CD8-positive, alpha-beta T cell (primary cell): ENCODE measurements at regions of chr12 and their contacts with region 1.

Region 1: GRCh38 chr12:110698171-110698902 is 9.4 kb upstream of the HVCN1 start:
- DNase-seq: peak; percentile 57 to 90 (median 76)
- ATAC-seq: peak; percentile 100
- H3K4me3 ChIP-seq: no peak overlapping the region
- H3K4me3 Mint-ChIP-seq: peak overlapping the region; percentile 16
- H3K27ac ChIP-seq: no peak overlapping the region
- H3K27ac Mint-ChIP-seq: peak overlapping the region; percentile 34
- H3K4me1 ChIP-seq: peaks cover 7% of the 10 kb centered on the region
- H3K4me1 Mint-ChIP-seq: peaks cover 9% of the 10 kb centered on the region
- H3K27me3 ChIP-seq: no peaks in the 10 kb centered on the region
- H3K27me3 Mint-ChIP-seq: no peaks in the 10 kb centered on the region
- CTCF ChIP-seq: peak; percentile 83

Region 2: GRCh38 chr12:110513842-110514241 is 184.5 kb before region 1 on chr12:
- CTCF ChIA-PET with region 1: interaction called, 3 read pairs
- POLR2A ChIA-PET with region 1: no interaction called
- intact Hi-C with region 1: loop called (anchors 2 to 5 kb)
- DNase-seq: no peak
- ATAC-seq: no peak
- H3K4me3 ChIP-seq: no peak overlapping the region
- H3K4me3 Mint-ChIP-seq: no peak overlapping the region
- H3K27ac ChIP-seq: no peak overlapping the region
- H3K27ac Mint-ChIP-seq: no peak overlapping the region
- H3K4me1 ChIP-seq: no peaks in the 10 kb centered on the region
- H3K4me1 Mint-ChIP-seq: no peaks in the 10 kb centered on the region
- H3K27me3 ChIP-seq: no peaks in the 10 kb centered on the region
- H3K27me3 Mint-ChIP-seq: no peaks in the 10 kb centered on the region
- CTCF ChIP-seq: no peak

Region 3: GRCh38 chr12:110613771-110614684 is 84.3 kb before region 1 on chr12 and contains the start of gene TCTN1:
- CTCF ChIA-PET with region 1: interaction called, 12 read pairs
- POLR2A ChIA-PET with region 1: interaction called, 3 read pairs
- intact Hi-C with region 1: loop called in 1 of 2 experiments (anchors 1 kb)
- DNase-seq: peak; percentile 90 to 97 (median 95)
- ATAC-seq: peak; percentile 100
- H3K4me3 ChIP-seq: peak within 1 kb of the TSS; percentile 75 to 76
- H3K4me3 Mint-ChIP-seq: peak within 1 kb of the TSS; percentile 88
- H3K27ac ChIP-seq: peak within 1 kb of the TSS; percentile 78 to 83
- H3K27ac Mint-ChIP-seq: peak within 1 kb of the TSS; percentile 85
- H3K4me1 ChIP-seq: peaks cover 5% of the 10 kb centered on the region
- H3K4me1 Mint-ChIP-seq: peaks cover 7% of the 10 kb centered on the region
- H3K27me3 ChIP-seq: no peaks in the 10 kb centered on the region
- H3K27me3 Mint-ChIP-seq: no peaks in the 10 kb centered on the region
- CTCF ChIP-seq: no peak
- total RNA-seq, gene TCTN1: 4.7 to 4.9 TPM

Region 4: DNA sequence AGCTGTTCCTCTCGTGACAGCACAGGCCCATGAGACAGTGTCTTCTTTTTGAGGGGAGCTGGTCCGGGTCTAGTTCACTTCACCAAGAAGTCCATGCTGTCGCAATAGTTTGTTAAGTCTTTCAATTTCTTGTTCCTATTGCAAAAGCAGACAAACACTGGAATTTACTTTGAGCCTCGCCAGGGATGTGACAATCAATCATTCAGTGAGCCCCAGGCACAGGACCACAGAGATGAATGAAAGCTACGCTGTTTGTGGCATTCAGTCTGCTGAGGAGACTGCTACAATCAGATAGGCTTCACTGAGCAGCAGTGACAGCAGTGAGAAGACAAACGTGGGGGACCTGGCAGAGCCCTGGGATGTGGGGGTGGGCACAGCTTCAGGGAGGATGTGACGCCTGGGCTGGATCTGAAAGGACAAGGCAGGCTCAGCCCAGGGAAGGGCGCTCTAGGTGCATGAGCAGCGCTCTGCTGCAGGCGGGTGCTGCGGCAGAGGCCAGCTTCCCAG is 48.9 kb before region 1 on chr12:
- CTCF ChIA-PET with region 1: no interaction called
- POLR2A ChIA-PET with region 1: no interaction called
- intact Hi-C with region 1: loop called in 1 of 2 experiments (anchors 2 kb)
- DNase-seq: no peak
- ATAC-seq: no peak
- H3K4me3 ChIP-seq: no peak overlapping the region
- H3K4me3 Mint-ChIP-seq: no peak overlapping the region
- H3K27ac ChIP-seq: no peak overlapping the region
- H3K27ac Mint-ChIP-seq: no peak overlapping the region
- H3K4me1 ChIP-seq: peaks cover 19% of the 10 kb centered on the region
- H3K4me1 Mint-ChIP-seq: peaks cover 23% of the 10 kb centered on the region
- H3K27me3 ChIP-seq: no peaks in the 10 kb centered on the region
- H3K27me3 Mint-ChIP-seq: no peaks in the 10 kb centered on the region
- CTCF ChIP-seq: no peak

Region 5: DNA sequence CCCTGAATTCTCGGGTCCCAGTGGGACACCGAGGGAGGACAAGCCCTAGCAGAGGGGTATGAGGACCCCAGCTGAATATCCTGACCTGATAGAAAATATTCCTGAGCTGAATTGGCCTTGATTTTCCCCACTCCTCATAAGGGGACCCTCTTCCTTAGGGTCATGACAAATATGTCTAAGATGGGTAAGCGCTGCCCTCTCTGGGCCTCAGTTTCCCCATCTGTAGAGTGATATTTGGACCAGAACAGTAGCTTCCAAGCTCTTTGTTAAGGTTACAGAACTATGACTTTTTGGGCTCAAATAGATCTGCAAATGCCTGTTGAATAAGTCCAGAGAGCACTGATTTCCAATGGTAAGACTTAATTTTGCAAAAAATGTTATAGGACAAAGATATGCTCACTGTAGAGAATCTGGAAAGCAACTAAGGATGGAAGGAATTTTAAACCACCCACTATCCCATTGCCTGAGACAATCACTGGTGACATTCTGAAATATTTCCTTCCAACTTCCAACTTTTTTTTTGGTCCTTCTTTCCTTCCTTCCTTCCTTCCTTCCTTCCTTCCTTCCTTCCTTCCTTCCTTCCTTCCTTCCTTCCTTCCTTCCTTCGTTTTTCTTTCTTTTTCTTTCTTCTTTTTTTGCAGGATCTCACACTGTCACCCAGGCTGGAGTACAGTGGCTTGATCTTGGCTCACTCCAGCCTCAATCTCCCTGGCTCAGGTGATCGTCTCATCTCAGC is 190.1 kb after region 1 on chr12:
- CTCF ChIA-PET with region 1: interaction called, 3 read pairs
- POLR2A ChIA-PET with region 1: no interaction called
- intact Hi-C with region 1: loop called in 1 of 2 experiments (anchors 5 kb)
- DNase-seq: no peak
- ATAC-seq: no peak
- H3K4me3 ChIP-seq: no peak overlapping the region
- H3K4me3 Mint-ChIP-seq: peak overlapping the region; percentile 94
- H3K27ac ChIP-seq: no peak overlapping the region
- H3K27ac Mint-ChIP-seq: no peak overlapping the region
- H3K4me1 ChIP-seq: no peaks in the 10 kb centered on the region
- H3K4me1 Mint-ChIP-seq: peaks cover 4% of the 10 kb centered on the region
- H3K27me3 ChIP-seq: no peaks in the 10 kb centered on the region
- H3K27me3 Mint-ChIP-seq: no peaks in the 10 kb centered on the region
- CTCF ChIP-seq: peak; percentile 48

Region 6: GRCh38 chr12:111086947-111087700 is 388.8 kb after region 1 on chr12:
- CTCF ChIA-PET with region 1: no interaction called
- POLR2A ChIA-PET with region 1: no interaction called
- intact Hi-C with region 1: no loop called
- DNase-seq: no peak
- ATAC-seq: no peak
- H3K4me3 ChIP-seq: no peak overlapping the region
- H3K4me3 Mint-ChIP-seq: no peak overlapping the region
- H3K27ac ChIP-seq: no peak overlapping the region
- H3K27ac Mint-ChIP-seq: no peak overlapping the region
- H3K4me1 ChIP-seq: no peaks in the 10 kb centered on the region
- H3K4me1 Mint-ChIP-seq: no peaks in the 10 kb centered on the region
- H3K27me3 ChIP-seq: no peaks in the 10 kb centered on the region
- H3K27me3 Mint-ChIP-seq: peaks cover 9% of the 10 kb centered on the region
- CTCF ChIP-seq: no peak